ENCODE measurements at regions of chr20 and their contacts with region 1.

Region 1: GRCh38 chr20:47648943-47649342 is 136.3 kb downstream of the SULF2 start:
- DNase-seq: no peak
- CTCF ChIP-seq: no peak

Region 2: GRCh38 chr20:47663333-47664067 is 14.6 kb after region 1 on chr20:
- CTCF ChIA-PET with region 1: interaction called, 23 read pairs
- POLR2A ChIA-PET with region 1: no interaction called
- DNase-seq: peak; percentile 84
- CTCF ChIP-seq: peak; percentile 97

Region 3: DNA sequence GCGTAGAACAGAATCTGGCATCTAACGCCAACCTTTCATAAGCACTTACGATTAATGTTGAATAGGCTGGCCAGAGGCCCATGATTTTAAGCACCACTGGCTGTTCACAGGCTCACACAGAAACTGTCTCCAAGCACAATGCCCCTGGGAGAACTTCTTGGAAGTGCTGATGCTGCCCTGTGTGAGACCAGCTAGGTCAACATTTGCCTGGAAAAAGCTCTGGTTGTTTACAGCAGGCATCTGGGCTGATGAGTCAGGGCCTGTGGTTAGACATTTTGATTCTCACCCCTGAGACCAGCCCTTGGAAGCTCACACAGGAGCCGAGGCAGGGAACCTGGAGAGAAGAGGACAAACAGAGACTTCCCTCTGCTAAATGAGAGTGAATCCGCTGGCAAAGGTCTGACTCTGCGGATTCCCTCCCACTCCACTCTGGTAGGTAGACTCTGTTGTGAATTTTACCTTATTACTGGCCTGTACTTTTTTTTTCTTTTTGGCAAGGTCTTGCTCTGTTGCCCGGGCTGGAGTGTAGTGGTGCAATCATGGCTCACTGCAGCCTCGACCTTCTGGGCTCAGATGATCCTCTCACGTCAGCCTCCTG is 143.2 kb after region 1 on chr20:
- CTCF ChIA-PET with region 1: no interaction called
- POLR2A ChIA-PET with region 1: no interaction called
- DNase-seq: no peak
- CTCF ChIP-seq: no peak